Activated T-helper 1 cell treated with anti-CD3 and anti-CD28 coated beads, Interleukin-12 subunit alpha, Interleukin-12 subunit beta, Interleukin-2, Interleukin-4 antibody, amounts not matched to agents 30 ng/mL and 10 ng/mL and 1 ng/mL, durations not matched to agents 14 hours and 24 hours and 36 hours (primary cell): ENCODE measurements at regions of chr11 and their contacts with region 1.

Region 1: GRCh38 chr11:81987829-81988472 is 745.7 kb downstream of the FAM181B start:
- DNase-seq: no peak
- H3K4me3 Mint-ChIP-seq: no peak overlapping the region
- H3K27ac Mint-ChIP-seq: no peak overlapping the region
- H3K4me1 Mint-ChIP-seq: no peaks in the 10 kb centered on the region
- H3K27me3 Mint-ChIP-seq: peaks cover 2% of the 10 kb centered on the region

Region 2: GRCh38 chr11:81602508-81602907 is 385.4 kb before region 1 on chr11:
- intact Hi-C with region 1: loop called (anchors 5 kb)
- DNase-seq: no peak
- H3K4me3 Mint-ChIP-seq: no peak overlapping the region
- H3K27ac Mint-ChIP-seq: no peak overlapping the region
- H3K4me1 Mint-ChIP-seq: no peaks in the 10 kb centered on the region
- H3K27me3 Mint-ChIP-seq: no peaks in the 10 kb centered on the region